ENCODE measurements at regions of chr7 and their contacts with region 1.

Region 1: DNA sequence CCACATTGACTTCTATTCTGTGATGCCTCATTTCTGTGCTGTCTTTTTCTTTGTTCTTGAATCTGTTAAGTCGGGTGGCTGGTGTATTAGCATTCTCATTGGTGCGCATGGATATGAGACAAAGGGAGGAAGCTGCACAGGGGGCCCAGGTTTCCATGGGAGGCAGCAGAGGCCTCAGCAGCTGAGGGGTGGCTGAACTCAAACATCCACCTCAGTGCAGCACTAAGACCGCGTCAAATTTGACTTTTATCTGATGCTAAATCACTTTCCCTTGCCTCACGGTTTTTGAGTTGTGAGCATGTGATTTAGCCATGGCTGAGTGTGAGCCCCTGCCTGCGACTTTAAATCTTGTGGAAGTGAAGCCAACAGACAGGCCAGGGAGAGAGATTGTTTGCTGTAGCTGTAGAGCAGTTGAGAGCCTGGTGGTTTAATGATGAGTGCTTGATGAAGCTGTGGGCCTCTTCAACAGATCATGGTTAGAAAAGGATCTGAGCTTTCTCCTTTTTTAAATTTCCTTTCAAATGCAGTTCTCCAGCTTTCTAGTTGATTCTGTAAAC is 193.2 kb upstream of the ZNF804B start:
- DNase-seq: no peak
- ATAC-seq: no peak
- H3K4me3 ChIP-seq: no peak overlapping the region
- H3K27ac ChIP-seq: no peak overlapping the region
- H3K4me1 ChIP-seq: no peaks in the 10 kb centered on the region
- H3K27me3 ChIP-seq: no peaks in the 10 kb centered on the region
- CTCF ChIP-seq: no peak
- EP300 ChIP-seq: no peak
- POLR2A ChIP-seq: no peak
- RAD21 ChIP-seq: no peak

Region 2: GRCh38 chr7:88826222-88826621 is 260.0 kb after region 1 on chr7:
- CTCF ChIA-PET with region 1: no interaction called
- POLR2A ChIA-PET with region 1: no interaction called
- RAD21 ChIA-PET with region 1: no interaction called
- SMC1A ChIA-PET with region 1: no interaction called
- in situ Hi-C with region 1: loop called (anchors 10 kb)
- intact Hi-C with region 1: no loop called
- DNase-seq: no peak
- ATAC-seq: peak; percentile 77
- H3K4me3 ChIP-seq: no peak overlapping the region
- H3K27ac ChIP-seq: no peak overlapping the region
- H3K4me1 ChIP-seq: no peaks in the 10 kb centered on the region
- H3K27me3 ChIP-seq: no peaks in the 10 kb centered on the region
- CTCF ChIP-seq: no peak
- EP300 ChIP-seq: no peak
- POLR2A ChIP-seq: no peak
- RAD21 ChIP-seq: no peak